CD4-positive, alpha-beta T cell (primary cell): ENCODE measurements at regions of chr11 and their contacts with region 1.

Region 1: GRCh38 chr11:65403607-65404121 is 17.2 kb downstream of the FRMD8 start:
- DNase-seq: peak in 2 of 14 experiments; percentile 47 to 49
- ATAC-seq: no peak
- H3K4me3 ChIP-seq: no peak overlapping the region
- H3K4me3 Mint-ChIP-seq: no peak overlapping the region
- H3K27ac ChIP-seq: peak overlapping the region in 1 of 2 donors; percentile 21
- H3K27ac Mint-ChIP-seq: peak overlapping the region; percentile 44
- H3K4me1 ChIP-seq: peaks cover 9% of the 10 kb centered on the region
- H3K4me1 Mint-ChIP-seq: peaks cover 5% of the 10 kb centered on the region
- H3K27me3 ChIP-seq: no peaks in the 10 kb centered on the region
- H3K27me3 Mint-ChIP-seq: no peaks in the 10 kb centered on the region
- CTCF ChIP-seq: no peak

Region 2: DNA sequence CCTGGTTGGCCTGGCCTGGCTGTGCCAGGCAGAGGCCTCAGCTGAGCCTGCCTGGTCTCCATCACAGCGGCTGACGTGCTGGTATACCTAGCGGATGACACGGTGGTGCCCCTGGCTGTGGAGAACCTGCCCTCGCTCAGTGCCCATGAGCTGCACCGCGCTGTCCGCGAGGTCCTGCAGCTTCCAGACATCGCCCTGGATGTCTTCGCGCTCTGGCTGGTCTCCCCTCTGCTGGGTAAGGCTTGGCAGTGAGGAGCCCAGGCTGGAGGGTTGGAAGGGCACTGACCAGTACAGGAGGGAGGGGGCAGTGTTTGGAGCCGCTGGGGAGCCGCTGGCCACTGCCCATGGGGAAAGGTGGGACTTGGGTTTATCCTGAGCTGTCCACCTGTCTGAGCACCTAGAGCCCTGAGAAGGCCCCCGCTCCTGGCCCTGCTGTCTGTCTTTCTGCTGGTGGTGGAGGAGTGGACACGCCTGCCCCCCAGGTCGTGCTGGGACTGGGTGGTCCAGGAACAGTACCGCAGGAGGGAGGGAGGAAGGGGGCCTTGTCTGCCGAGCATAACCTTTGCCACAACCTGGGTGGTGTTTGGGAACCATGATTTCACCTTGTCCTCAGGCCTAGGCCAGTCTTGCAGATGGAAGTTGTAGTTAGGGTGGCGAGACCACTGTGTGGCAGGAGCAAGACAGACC is 14.2 kb before region 1 on chr11:
- CTCF ChIA-PET with region 1: no interaction called
- POLR2A ChIA-PET with region 1: interaction called, 3 read pairs
- intact Hi-C with region 1: loop called in 1 of 2 experiments (anchors 2 kb)
- DNase-seq: no peak
- ATAC-seq: no peak
- H3K4me3 ChIP-seq: no peak overlapping the region
- H3K4me3 Mint-ChIP-seq: peak overlapping the region; percentile 82
- H3K27ac ChIP-seq: no peak overlapping the region
- H3K27ac Mint-ChIP-seq: peak overlapping the region; percentile 78
- H3K4me1 ChIP-seq: peaks cover 66% of the 10 kb centered on the region
- H3K4me1 Mint-ChIP-seq: peaks cover 51% of the 10 kb centered on the region
- H3K27me3 ChIP-seq: no peaks in the 10 kb centered on the region
- H3K27me3 Mint-ChIP-seq: no peaks in the 10 kb centered on the region
- CTCF ChIP-seq: no peak